Heart left ventricle (tissue), 16 donors: ENCODE measurements at regions of chr1 and their contacts with region 1.

Region 1: DNA sequence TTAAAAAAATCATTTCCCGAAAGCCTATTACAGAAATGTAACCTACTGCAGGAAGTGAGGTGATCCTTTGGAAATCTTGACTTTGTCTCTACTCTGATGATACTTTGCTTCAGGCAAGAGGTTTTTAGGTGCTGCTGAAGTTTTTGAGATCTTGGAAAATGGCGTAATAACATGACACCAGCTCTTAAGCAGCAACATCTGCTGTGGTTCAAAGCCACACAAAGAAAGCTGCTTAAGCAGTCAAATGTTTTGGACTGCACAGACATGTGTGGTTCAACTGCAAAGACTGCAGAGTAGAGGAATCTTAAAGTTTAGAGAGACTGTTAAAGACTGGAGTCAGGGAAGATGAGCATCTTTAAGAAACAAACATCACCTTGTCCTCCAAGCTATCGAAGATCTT is 139.0 kb downstream of the RASAL2 start:
- DNase-seq: no peak
- ATAC-seq: no peak
- H3K4me3 ChIP-seq: no peak overlapping the region
- H3K27ac ChIP-seq: no peak overlapping the region
- H3K4me1 ChIP-seq: peaks cover 0 to 13% (median 0%) of the 10 kb centered on the region in 12 donors
- H3K27me3 ChIP-seq: no peaks in the 10 kb centered on the region
- CTCF ChIP-seq: no peak
- POLR2A ChIP-seq: no peak

Region 2: GRCh38 chr1:177928194-177928593 is 304.8 kb before region 1 on chr1:
- intact Hi-C with region 1: no loop called
- DNase-seq: no peak
- ATAC-seq: no peak
- H3K4me3 ChIP-seq: no peak overlapping the region
- H3K27ac ChIP-seq: no peak overlapping the region
- H3K4me1 ChIP-seq: no peaks in the 10 kb centered on the region
- H3K27me3 ChIP-seq: no peaks in the 10 kb centered on the region
- CTCF ChIP-seq: peak in 1 of 12 donors; percentile 8
- POLR2A ChIP-seq: no peak

Region 3: DNA sequence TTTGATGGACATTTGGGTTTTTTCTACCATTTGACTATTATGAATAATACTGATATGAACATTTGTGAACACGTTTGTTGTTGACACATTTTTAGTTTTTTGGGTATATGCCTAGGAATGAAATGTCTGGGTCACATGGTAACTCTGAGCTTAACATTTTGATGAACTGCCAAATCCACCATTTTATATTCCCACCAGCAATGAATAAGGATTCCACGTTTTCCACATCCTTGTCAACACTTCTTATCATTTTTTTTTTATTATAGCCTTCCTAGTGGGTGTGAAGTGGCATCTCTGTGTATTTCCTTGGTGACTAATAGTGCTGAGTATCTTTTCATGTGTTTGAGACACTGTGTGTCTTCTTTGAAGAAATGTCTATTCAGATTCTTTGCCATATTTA is 71.4 kb before region 1 on chr1:
- intact Hi-C with region 1: loop called in 1 of 10 experiments (anchors 5 kb)
- DNase-seq: no peak
- ATAC-seq: no peak
- H3K4me3 ChIP-seq: no peak overlapping the region
- H3K27ac ChIP-seq: no peak overlapping the region
- H3K4me1 ChIP-seq: peaks cover 0 to 36% (median 5%) of the 10 kb centered on the region in 12 donors
- H3K27me3 ChIP-seq: no peaks in the 10 kb centered on the region
- CTCF ChIP-seq: no peak
- POLR2A ChIP-seq: no peak

Region 4: GRCh38 chr1:178254433-178254832 is 21.5 kb after region 1 on chr1:
- intact Hi-C with region 1: loop called in 1 of 10 experiments (anchors 2 kb)
- DNase-seq: no peak
- ATAC-seq: no peak
- H3K4me3 ChIP-seq: no peak overlapping the region
- H3K27ac ChIP-seq: no peak overlapping the region
- H3K4me1 ChIP-seq: no peaks in the 10 kb centered on the region
- H3K27me3 ChIP-seq: no peaks in the 10 kb centered on the region
- CTCF ChIP-seq: no peak
- POLR2A ChIP-seq: no peak

Region 5: DNA sequence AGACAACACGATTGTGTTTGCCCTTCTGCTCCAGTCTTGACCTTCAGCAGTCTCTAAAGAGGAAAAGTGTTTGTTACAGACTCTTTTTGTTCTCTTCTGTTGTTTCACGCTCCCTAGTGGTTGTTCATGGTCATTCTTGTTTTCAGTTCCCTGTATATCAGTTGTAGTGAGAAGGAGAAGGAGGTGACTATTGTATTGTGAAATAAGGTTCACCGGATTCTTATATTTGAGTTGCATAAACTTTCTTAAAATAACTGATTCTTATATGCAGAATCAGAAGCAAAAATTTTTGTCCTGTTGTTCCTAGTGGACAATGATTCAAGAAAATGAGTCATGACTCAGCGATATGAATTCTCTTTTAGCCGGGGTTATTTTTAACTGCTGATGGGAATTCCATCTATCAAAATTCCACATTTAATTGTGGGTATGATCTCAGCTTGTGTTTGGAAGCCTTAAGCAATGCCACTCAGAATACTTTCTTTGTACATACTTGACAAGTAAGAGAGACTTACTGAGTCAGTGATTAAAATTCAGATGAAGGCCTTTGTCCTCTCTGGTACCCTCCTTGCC is 111.7 kb after region 1 on chr1:
- intact Hi-C with region 1: no loop called
- DNase-seq: no peak
- ATAC-seq: peak; percentile 63 to 83 (median 82)
- H3K4me3 ChIP-seq: peak overlapping the region in 6 of 12 donors; percentile 3 to 12 (median 5)
- H3K27ac ChIP-seq: peak overlapping the region; percentile 69 to 93 (median 83)
- H3K4me1 ChIP-seq: peaks cover 0 to 60% (median 28%) of the 10 kb centered on the region in 12 donors
- H3K27me3 ChIP-seq: no peaks in the 10 kb centered on the region
- CTCF ChIP-seq: peak; percentile 28 to 71 (median 50)
- POLR2A ChIP-seq: no peak